ENCODE measurements at regions of chrX and their contacts with region 1.

Region 1: DNA sequence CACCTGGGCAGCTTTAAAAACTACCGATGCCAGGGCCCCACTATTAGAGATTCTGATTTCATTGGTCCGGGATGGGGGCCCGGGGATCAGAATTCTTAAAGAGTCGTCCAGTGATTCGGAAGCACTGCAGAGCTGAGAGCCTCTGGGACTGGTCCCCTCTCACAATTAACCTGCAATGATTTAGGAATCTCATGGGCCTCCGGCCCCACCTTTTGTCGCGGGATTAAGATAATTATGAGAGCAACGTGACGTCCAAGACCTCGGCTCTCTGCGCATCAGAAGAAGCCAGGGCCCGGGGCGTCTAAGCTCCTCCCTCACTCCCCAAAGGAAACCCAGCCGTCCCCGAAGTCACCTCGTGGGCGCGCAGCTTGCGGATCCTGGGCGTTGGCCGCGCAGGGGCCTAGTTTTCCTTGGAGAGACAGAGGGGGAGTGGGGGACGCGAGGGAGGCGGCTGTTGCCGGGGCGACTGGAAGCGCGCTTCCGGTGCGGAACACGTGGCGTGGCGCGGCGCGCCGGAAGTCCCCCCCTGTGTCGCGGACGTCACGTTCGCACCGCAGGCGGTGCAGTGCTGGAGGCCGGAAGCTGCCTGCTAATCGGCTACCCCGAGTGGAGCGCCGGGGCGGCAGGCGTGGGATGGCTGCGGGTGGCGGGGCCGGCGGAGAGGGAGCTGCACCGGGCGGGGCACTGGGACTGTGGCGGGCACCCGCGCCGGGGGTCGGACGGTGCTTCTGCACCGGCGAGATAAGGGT is at the start of gene GEMIN8:
- DNase-seq: peak; percentile 73
- H3K4me3 ChIP-seq: peak within 1 kb of the TSS; percentile 58 to 89 (median 77)
- H3K27ac ChIP-seq: peak within 1 kb of the TSS; percentile 92
- H3K4me1 ChIP-seq: peaks cover 24% of the 10 kb centered on the region
- H3K27me3 ChIP-seq: no peaks in the 10 kb centered on the region
- CTCF ChIP-seq: no peak
- POLR2A ChIP-seq: peak; percentile 64
- total RNA-seq, gene GEMIN8: 17.7 and 18.5 TPM in 2 replicates

Region 2: GRCh38 chrX:12946838-12947544 is 1082.6 kb before region 1 on chrX:
- CTCF ChIA-PET with region 1: interaction called, 3 read pairs
- POLR2A ChIA-PET with region 1: no interaction called
- dilution Hi-C with region 1: no loop called
- intact Hi-C with region 1: loop called (anchors 5 kb)
- DNase-seq: peak; percentile 90
- H3K4me3 ChIP-seq: no peak overlapping the region
- H3K27ac ChIP-seq: peak overlapping the region; percentile 64
- H3K4me1 ChIP-seq: peaks cover 27% of the 10 kb centered on the region
- H3K27me3 ChIP-seq: no peaks in the 10 kb centered on the region
- CTCF ChIP-seq: peak; percentile 85 to 87
- POLR2A ChIP-seq: no peak

Region 3: DNA sequence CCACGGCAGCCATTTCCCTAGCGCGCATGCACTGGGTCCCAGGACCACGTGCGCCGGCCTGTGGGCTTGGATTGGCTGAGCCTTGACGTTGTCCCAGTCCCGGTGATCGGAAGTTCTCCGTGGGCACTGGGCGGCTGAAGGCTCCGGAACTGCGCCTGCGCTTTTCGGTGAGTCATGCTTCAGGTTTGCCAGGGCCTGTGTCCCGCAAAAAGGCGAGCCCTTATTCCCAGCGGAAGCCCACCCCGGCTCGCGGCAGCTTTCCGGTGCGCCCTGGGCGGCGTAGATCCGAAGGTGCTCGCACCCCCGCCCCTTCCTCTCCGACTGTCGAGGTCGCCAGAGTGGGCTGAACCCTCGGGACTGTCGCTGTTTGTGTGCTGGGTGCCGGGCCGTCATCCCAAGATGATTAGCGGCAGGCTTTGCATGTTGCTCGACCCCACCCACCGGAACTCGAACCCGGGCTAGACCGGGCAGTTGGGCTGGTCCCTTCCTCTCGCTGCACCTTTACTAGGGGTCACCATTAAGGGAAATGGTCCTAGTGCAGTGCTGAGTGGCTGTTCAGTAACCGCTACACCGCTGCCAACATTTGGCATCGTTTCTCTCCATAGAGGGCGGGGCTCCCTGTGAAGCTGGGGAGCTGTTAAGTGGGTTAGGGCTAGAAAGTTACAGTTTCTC is 376.4 kb before region 1 on chrX and contains the start of gene TCEANC:
- CTCF ChIA-PET with region 1: no interaction called
- POLR2A ChIA-PET with region 1: interaction called, 3 read pairs
- dilution Hi-C with region 1: no loop called
- intact Hi-C with region 1: loop called (anchors 1 kb)
- DNase-seq: peak; percentile 95
- H3K4me3 ChIP-seq: peak within 1 kb of the TSS; percentile 33 to 89 (median 87)
- H3K27ac ChIP-seq: peak within 1 kb of the TSS; percentile 63
- H3K4me1 ChIP-seq: peaks cover 6% of the 10 kb centered on the region
- H3K27me3 ChIP-seq: no peaks in the 10 kb centered on the region
- CTCF ChIP-seq: no peak
- POLR2A ChIP-seq: peak; percentile 59
- total RNA-seq, gene TCEANC: 0.75 and 1.8 TPM in 2 replicates

Region 4: GRCh38 chrX:13750204-13750603 is 279.4 kb before region 1 on chrX:
- CTCF ChIA-PET with region 1: interaction called, 18 read pairs
- POLR2A ChIA-PET with region 1: no interaction called
- dilution Hi-C with region 1: no loop called
- intact Hi-C with region 1: loop called (anchors 1 kb)
- DNase-seq: peak; percentile 35
- H3K4me3 ChIP-seq: no peak overlapping the region
- H3K27ac ChIP-seq: no peak overlapping the region
- H3K4me1 ChIP-seq: no peaks in the 10 kb centered on the region
- H3K27me3 ChIP-seq: no peaks in the 10 kb centered on the region
- CTCF ChIP-seq: peak; percentile 22 to 31
- POLR2A ChIP-seq: no peak

Region 5: GRCh38 chrX:13898083-13898482 is 131.5 kb before region 1 on chrX:
- CTCF ChIA-PET with region 1: no interaction called
- POLR2A ChIA-PET with region 1: no interaction called
- dilution Hi-C with region 1: no loop called
- intact Hi-C with region 1: loop called (anchors 1 kb)
- DNase-seq: no peak
- H3K4me3 ChIP-seq: no peak overlapping the region
- H3K27ac ChIP-seq: no peak overlapping the region
- H3K4me1 ChIP-seq: no peaks in the 10 kb centered on the region
- H3K27me3 ChIP-seq: peaks cover 0 to 2% of the 10 kb centered on the region in 2 experiments
- CTCF ChIP-seq: no peak
- POLR2A ChIP-seq: no peak

Region 6: DNA sequence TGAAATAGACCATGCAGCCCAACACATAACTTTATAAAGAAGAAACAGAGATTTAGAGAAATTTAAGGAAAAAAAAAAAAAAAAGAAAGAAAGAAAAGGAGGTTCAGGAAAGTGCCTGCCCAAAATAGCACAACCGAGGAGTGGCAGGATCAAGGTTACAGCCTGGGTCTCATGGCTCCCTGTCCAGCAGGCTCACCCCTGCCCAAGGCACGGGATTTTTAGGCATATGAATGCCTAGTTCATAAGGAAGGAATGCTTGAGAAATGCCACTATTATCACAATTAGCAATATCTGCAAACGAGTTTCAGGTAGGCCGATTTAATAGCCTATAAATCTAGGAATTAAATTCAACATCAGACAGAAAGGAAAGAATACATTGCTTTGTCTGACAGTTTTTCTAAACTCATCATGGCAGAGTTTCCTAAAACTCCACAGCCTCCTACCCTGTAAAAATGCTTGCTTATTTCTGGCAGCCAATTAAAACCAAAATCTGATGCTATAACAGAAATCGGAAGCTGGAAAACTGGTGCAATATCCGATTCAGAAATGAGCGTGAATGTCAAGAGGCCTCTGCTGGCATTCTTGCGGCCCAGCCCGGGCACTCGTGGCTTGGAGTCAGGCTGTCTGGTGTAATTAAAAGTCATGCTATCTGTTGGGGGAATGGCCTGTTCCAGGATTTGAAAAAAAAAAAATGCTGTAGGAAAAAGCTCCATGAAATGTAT is 63.4 kb before region 1 on chrX:
- CTCF ChIA-PET with region 1: no interaction called
- POLR2A ChIA-PET with region 1: no interaction called
- dilution Hi-C with region 1: no loop called
- intact Hi-C with region 1: no loop called
- DNase-seq: no peak
- H3K4me3 ChIP-seq: no peak overlapping the region
- H3K27ac ChIP-seq: no peak overlapping the region
- H3K4me1 ChIP-seq: no peaks in the 10 kb centered on the region
- H3K27me3 ChIP-seq: no peaks in the 10 kb centered on the region
- CTCF ChIP-seq: no peak
- POLR2A ChIP-seq: no peak

Region 7: GRCh38 chrX:14300376-14300775 is 270.8 kb after region 1 on chrX:
- CTCF ChIA-PET with region 1: no interaction called
- POLR2A ChIA-PET with region 1: no interaction called
- dilution Hi-C with region 1: no loop called
- intact Hi-C with region 1: no loop called
- DNase-seq: no peak
- H3K4me3 ChIP-seq: no peak overlapping the region
- H3K27ac ChIP-seq: no peak overlapping the region
- H3K4me1 ChIP-seq: no peaks in the 10 kb centered on the region
- H3K27me3 ChIP-seq: no peaks in the 10 kb centered on the region
- CTCF ChIP-seq: no peak
- POLR2A ChIP-seq: no peak

Region 8: GRCh38 chrX:14440106-14440505 is 410.5 kb after region 1 on chrX:
- CTCF ChIA-PET with region 1: no interaction called
- POLR2A ChIA-PET with region 1: no interaction called
- dilution Hi-C with region 1: no loop called
- intact Hi-C with region 1: no loop called
- DNase-seq: no peak
- H3K4me3 ChIP-seq: no peak overlapping the region
- H3K27ac ChIP-seq: no peak overlapping the region
- H3K4me1 ChIP-seq: no peaks in the 10 kb centered on the region
- H3K27me3 ChIP-seq: no peaks in the 10 kb centered on the region
- CTCF ChIP-seq: no peak
- POLR2A ChIP-seq: no peak

Region 9: DNA sequence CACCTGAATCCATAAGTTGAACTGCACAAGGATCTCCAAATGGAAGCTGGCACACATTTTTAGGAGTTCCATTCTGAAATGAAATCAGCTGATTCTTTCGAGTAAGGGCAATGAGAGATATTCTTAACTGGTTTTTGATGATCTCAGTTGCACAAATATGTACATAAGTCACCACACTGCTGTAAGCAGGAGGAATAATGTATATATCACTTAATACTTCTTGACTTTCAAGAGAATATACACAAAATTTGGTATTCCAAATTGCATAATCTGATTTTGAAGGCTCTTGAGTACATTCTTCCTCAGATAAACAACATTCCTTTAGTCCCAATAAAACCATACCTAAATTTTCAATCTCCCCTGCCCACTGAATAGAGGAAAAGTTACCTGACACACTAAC is 835.0 kb after region 1 on chrX:
- CTCF ChIA-PET with region 1: no interaction called
- POLR2A ChIA-PET with region 1: no interaction called
- dilution Hi-C with region 1: no loop called
- intact Hi-C with region 1: no loop called
- DNase-seq: no peak
- H3K4me3 ChIP-seq: no peak overlapping the region
- H3K27ac ChIP-seq: no peak overlapping the region
- H3K4me1 ChIP-seq: no peaks in the 10 kb centered on the region
- H3K27me3 ChIP-seq: no peaks in the 10 kb centered on the region
- CTCF ChIP-seq: no peak
- POLR2A ChIP-seq: no peak